ENCODE measurements at regions of chr3 and their contacts with region 1.

Region 1: DNA sequence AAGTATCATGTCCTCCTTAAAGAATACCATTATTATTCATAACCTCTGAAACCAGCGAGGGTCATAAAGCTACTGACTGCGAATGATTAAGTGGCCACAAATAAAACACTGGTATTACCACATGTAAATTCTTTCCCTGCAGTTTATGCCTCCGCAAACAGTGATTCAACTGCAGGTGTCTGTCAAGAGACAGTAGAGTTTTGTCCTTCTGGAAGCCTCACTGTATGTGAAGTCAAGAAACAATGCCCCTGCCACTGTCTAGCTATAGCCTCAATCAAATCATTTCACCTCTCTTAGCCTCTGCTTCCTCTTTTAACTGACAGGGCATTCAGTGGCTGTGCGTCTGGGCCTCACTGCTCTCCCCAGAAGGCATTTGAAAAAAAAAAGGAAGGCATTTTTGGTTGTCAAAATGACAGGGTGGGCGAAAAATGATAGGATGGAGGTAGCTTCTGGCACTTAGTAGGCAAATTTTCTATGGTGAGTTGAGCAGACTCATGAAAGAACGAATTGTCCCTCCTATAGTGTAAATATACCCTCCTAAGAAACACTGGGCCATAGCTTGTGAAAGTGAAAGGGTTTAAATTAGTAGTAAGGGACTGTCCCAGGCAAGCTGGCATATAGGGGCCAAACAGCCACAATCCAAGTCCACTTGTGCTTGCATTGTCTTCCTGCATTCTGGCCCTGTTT is 66.7 kb downstream of the FILIP1L start:
- DNase-seq: peak; percentile 89
- ATAC-seq: peak; percentile 97
- H3K4me3 ChIP-seq: peak overlapping the region in 1 of 2 experiments; percentile 42; a peak in 2 of 4 replicates
- H3K27ac ChIP-seq: peak overlapping the region; percentile 91
- H3K4me1 ChIP-seq: peaks cover 33% of the 10 kb centered on the region
- H3K27me3 ChIP-seq: no peaks in the 10 kb centered on the region
- CTCF ChIP-seq: no peak

Region 2: GRCh38 chr3:99842826-99843589 is 204.6 kb before region 1 on chr3:
- CTCF ChIA-PET with region 1: no interaction called
- POLR2A ChIA-PET with region 1: no interaction called
- in situ Hi-C with region 1: no loop called
- intact Hi-C with region 1: loop called (anchors 5 kb)
- DNase-seq: no peak
- ATAC-seq: peak; percentile 87
- H3K4me3 ChIP-seq: no peak overlapping the region
- H3K27ac ChIP-seq: peak overlapping the region; percentile 64
- H3K4me1 ChIP-seq: peaks cover 16% of the 10 kb centered on the region
- H3K27me3 ChIP-seq: no peaks in the 10 kb centered on the region
- CTCF ChIP-seq: peak; percentile 79